IMR-90 (cell line): ENCODE measurements at regions of chr17 and their contacts with region 1.

Region 1: GRCh38 chr17:71460943-71461342 is 659.9 kb upstream of the SOX9 start:
- DNase-seq: peak; percentile 43
- ATAC-seq: no peak
- H3K4me3 ChIP-seq: no peak overlapping the region
- H3K27ac ChIP-seq: no peak overlapping the region
- H3K4me1 ChIP-seq: no peaks in the 10 kb centered on the region
- H3K27me3 ChIP-seq: no peaks in the 10 kb centered on the region
- CTCF ChIP-seq: peak; percentile 53
- POLR2A ChIP-seq: no peak
- RAD21 ChIP-seq: peak; percentile 63

Region 2: DNA sequence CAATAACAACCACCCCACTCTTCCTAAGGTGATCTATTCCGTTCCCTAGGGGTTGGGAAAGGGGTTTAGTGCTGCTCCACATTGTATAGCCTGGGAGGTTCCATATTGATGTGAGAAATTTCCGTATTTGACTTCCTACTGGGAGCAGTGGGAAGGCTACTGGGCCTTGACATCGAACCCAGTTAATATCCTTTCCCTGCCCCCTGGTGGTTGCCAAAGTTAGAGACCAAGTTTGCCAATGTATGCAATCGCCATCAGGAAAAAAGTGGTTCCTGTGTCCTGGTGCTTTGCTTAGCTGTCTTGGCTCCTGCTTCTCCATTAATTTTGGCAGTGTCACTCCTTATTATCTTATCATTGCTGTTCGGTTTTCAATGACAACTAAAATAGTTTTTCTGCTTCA is 376.7 kb before region 1 on chr17:
- CTCF ChIA-PET with region 1: no interaction called
- POLR2A ChIA-PET with region 1: no interaction called
- dilution Hi-C with region 1: no loop called
- in situ Hi-C with region 1: no loop called
- intact Hi-C with region 1: loop called (anchors 10 kb)
- DNase-seq: peak; percentile 22
- ATAC-seq: peak; percentile 53
- H3K4me3 ChIP-seq: no peak overlapping the region
- H3K27ac ChIP-seq: no peak overlapping the region
- H3K4me1 ChIP-seq: no peaks in the 10 kb centered on the region
- H3K27me3 ChIP-seq: no peaks in the 10 kb centered on the region
- CTCF ChIP-seq: peak; percentile 45
- POLR2A ChIP-seq: no peak
- RAD21 ChIP-seq: peak; percentile 47

Region 3: GRCh38 chr17:71237903-71238538 is 222.9 kb before region 1 on chr17:
- CTCF ChIA-PET with region 1: interaction called, 5 read pairs
- POLR2A ChIA-PET with region 1: no interaction called
- dilution Hi-C with region 1: no loop called
- in situ Hi-C with region 1: loop called (anchors 10 kb)
- intact Hi-C with region 1: loop called (anchors 1 kb)
- DNase-seq: peak; percentile 53
- ATAC-seq: peak; percentile 83
- H3K4me3 ChIP-seq: no peak overlapping the region
- H3K27ac ChIP-seq: no peak overlapping the region
- H3K4me1 ChIP-seq: peaks cover 2% of the 10 kb centered on the region; the same call in 1 of the 2 replicates
- H3K27me3 ChIP-seq: no peaks in the 10 kb centered on the region
- CTCF ChIP-seq: peak; percentile 48
- POLR2A ChIP-seq: no peak
- RAD21 ChIP-seq: peak; percentile 70

Region 4: GRCh38 chr17:71338396-71338795 is 122.5 kb before region 1 on chr17:
- CTCF ChIA-PET with region 1: no interaction called
- POLR2A ChIA-PET with region 1: no interaction called
- dilution Hi-C with region 1: no loop called
- in situ Hi-C with region 1: no loop called
- intact Hi-C with region 1: loop called (anchors 10 kb)
- DNase-seq: peak; percentile 43
- ATAC-seq: no peak; the same call in 1 of the 2 replicates
- H3K4me3 ChIP-seq: peak overlapping the region; percentile 46; the same call in 1 of the 2 replicates
- H3K27ac ChIP-seq: no peak overlapping the region
- H3K4me1 ChIP-seq: no peaks in the 10 kb centered on the region; the same call in 1 of the 2 replicates
- H3K27me3 ChIP-seq: no peaks in the 10 kb centered on the region
- CTCF ChIP-seq: no peak
- POLR2A ChIP-seq: no peak
- RAD21 ChIP-seq: no peak